Motor neuron (in vitro differentiated cells): ENCODE measurements at regions of chr7 and their contacts with region 1.

Region 1: GRCh38 chr7:18345641-18346234 is 149.8 kb upstream of the HDAC9 start:
- ATAC-seq: peak in 7 of 8 experiments; percentile 33 to 60 (median 50)
- H3K4me3 ChIP-seq: no peak overlapping the region
- H3K27ac ChIP-seq: no peak overlapping the region
- H3K4me1 ChIP-seq: no peaks in the 10 kb centered on the region

Region 2: DNA sequence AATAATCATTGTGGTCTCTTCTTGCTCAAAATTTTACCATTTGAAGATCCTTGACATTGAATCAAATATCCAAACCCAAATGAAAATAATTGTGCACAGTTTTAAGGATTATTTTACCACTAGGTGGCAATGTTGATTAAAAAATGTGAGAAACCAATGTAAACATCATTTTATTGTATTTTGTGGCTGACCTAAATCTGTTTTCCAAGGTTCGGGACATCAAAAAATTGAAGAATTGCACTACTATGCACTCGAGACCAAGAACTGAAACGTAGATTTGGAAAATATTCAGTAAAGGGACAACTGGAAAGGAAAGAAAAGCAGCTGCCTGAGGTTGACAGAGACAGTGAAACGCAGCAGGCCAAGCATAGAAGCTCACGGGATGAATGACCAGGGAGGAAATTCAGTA is 664.8 kb before region 1 on chr7:
- in situ Hi-C with region 1: loop called in 1 of 9 experiments (anchors 25 kb)
- ATAC-seq: peak in 4 of 8 experiments; percentile 18 to 49 (median 36)
- H3K4me3 ChIP-seq: no peak overlapping the region
- H3K27ac ChIP-seq: no peak overlapping the region
- H3K4me1 ChIP-seq: peaks cover 5 to 10% of the 10 kb centered on the region in 2 donors

Region 3: DNA sequence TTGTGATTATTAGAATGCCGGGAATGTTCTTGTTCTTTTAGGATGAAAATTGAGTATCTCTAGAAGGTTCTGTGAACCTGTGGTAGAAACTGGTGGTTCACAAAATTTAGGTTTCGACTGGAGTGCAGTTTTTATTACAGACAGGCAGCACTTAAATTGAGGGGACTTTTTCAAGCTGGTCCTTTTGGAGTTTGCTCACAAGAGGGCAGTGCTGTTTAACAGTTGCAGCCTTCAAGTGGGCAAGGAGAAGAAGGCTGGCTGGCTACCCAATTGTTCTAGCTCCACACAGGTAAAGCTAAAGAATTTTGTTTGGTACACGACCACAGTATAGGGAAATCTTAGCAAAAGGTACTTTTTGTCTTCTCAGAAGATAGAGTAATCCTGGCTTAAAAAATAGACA is 639.0 kb before region 1 on chr7:
- in situ Hi-C with region 1: loop called in 4 of 9 experiments (anchors 10 to 25 kb)
- ATAC-seq: peak; percentile 53 to 85 (median 70)
- H3K4me3 ChIP-seq: no peak overlapping the region
- H3K27ac ChIP-seq: no peak overlapping the region
- H3K4me1 ChIP-seq: peaks cover 5 to 6% of the 10 kb centered on the region in 2 donors

Region 4: GRCh38 chr7:17769918-17770317 is 575.8 kb before region 1 on chr7:
- in situ Hi-C with region 1: loop called in 1 of 9 experiments (anchors 25 kb)
- ATAC-seq: peak in 7 of 8 experiments; percentile 23 to 82 (median 51)
- H3K4me3 ChIP-seq: no peak overlapping the region
- H3K27ac ChIP-seq: no peak overlapping the region
- H3K4me1 ChIP-seq: no peaks in the 10 kb centered on the region

Region 5: DNA sequence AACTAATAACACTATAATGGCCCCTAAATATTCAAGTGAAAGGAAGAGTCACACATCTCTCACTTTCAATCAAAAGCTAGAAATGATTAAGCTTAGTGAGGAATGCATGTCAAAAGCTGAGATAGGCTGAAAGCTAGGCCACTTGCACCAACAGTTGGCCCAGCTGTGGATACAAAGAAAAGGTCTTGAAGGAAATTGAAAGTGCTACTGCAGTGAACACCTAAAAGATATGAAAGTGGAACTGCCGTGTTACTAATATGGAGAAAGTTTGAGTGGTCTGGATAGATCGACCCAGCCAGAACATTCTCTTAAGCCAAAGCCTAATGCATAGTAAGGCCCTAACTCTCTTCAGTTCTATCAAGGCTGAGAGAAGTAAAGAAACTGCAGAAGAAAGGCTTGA is 393.4 kb before region 1 on chr7:
- in situ Hi-C with region 1: loop called in 1 of 9 experiments (anchors 25 kb)
- ATAC-seq: no peak
- H3K4me3 ChIP-seq: no peak overlapping the region
- H3K27ac ChIP-seq: no peak overlapping the region
- H3K4me1 ChIP-seq: no peaks in the 10 kb centered on the region

Region 6: DNA sequence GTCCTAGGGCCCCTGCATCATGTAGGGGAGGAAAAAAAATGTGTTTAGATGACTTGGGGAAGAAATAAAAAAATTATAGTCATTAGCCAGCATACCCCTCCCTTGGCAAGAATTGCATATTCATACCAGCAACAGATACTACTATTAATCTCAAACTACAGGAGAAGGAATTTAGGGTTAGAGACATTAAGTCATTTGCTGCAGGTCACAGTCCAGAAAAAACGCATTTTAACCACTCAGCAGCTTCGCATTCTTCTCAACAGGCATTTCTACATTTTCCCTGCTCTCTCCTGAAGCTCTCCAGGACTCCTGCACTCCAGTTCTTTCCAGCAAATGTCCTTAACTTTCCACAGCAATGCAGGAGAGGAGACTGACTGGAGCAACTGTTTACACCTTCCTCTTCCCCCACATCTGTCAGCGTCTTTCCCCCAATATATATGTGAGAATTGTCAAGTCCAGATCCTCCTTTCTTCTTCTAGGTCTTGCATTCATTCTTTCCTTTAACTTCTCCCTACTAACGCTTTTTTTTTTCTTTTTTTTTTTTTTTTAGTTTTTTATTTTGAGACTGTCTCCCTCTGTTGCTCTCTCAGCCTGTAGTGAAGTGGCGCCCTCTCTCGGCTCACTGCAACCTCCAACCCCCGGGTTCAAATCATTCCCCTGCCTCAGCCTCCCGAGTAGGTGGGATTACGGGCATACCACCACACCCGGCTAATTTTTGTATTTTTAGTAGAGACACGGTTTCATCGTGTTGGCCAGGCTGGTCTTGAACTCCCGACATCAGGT is 353.7 kb before region 1 on chr7:
- in situ Hi-C with region 1: loop called in 1 of 9 experiments (anchors 25 kb)
- ATAC-seq: peak in 1 of 8 experiments; percentile 25
- H3K4me3 ChIP-seq: no peak overlapping the region
- H3K27ac ChIP-seq: no peak overlapping the region
- H3K4me1 ChIP-seq: peaks cover 5 to 9% of the 10 kb centered on the region in 2 donors